ENCODE measurements at regions of chr14 and their contacts with region 1.

Region 1: DNA sequence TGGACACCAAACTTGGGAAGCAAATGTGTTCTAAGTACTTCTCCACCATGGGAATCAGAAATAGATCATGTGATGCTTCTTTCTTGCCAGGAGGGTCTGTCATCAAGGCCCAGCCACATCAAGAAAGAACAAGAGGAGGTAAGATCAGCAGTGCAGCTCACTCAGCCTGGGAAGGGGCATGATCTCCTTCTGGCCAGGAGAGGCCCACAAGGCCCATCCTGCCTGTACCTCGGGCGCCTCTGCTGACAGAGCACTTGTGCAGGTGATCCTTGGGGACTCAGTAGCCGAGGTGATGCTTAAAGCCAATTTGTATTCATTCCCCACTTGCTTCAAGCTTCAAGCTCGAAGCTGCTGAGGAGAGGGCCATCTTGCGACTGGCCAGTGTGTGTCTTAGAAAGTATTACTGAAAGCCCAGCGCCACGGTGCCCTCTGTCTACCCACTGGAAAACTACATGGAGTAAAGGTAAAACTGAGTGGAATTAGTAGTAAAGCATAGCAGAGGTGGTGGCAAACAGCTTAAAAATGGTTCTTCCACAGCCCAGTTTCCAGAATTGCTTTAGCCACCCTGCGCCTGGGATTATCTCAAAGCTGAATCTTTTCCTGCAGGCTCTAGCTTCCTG is 26.2 kb downstream of the RTRAF start:
- DNase-seq: no peak
- CTCF ChIP-seq: peak; percentile 9

Region 2: GRCh38 chr14:51996148-51996746 is 19.3 kb before region 1 on chr14:
- CTCF ChIA-PET with region 1: interaction called, 11 read pairs
- POLR2A ChIA-PET with region 1: no interaction called
- DNase-seq: no peak
- CTCF ChIP-seq: peak; percentile 41

Region 3: GRCh38 chr14:52052288-52052943 is 36.9 kb after region 1 on chr14:
- CTCF ChIA-PET with region 1: no interaction called
- POLR2A ChIA-PET with region 1: no interaction called
- DNase-seq: no peak
- CTCF ChIP-seq: no peak